ENCODE measurements at regions of chr21 and their contacts with region 1.

Region 1: GRCh38 chr21:33947451-33948095 is 32.0 kb upstream of the ATP5PO start:
- DNase-seq: peak; percentile 76
- H3K4me3 ChIP-seq: no peak overlapping the region
- H3K27ac ChIP-seq: peak overlapping the region; percentile 76
- H3K4me1 ChIP-seq: peaks cover 4% of the 10 kb centered on the region
- H3K27me3 ChIP-seq: no peaks in the 10 kb centered on the region
- CTCF ChIP-seq: no peak

Region 2: DNA sequence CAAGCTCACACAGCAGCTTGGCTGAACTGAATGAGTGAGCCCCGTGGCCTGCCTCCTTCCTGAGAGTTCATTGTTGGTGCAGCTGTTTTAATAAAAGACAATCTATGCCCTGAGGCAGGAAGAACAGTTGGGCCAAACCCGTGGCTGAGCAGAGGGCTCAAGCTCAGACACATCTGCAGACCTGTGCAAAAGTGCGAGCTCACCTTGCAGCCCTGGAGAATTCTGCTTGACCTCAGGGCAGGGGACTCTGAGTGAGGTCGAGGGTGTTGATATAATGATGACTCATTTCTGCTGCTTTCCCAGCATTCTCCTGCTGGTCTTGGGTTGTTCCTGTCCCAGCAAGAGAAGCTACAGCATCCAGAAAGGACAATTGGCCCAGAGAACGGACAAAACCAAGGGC is 93.0 kb before region 1 on chr21:
- intact Hi-C with region 1: no loop called
- DNase-seq: no peak
- H3K4me3 ChIP-seq: no peak overlapping the region
- H3K27ac ChIP-seq: no peak overlapping the region
- H3K4me1 ChIP-seq: no peaks in the 10 kb centered on the region
- H3K27me3 ChIP-seq: no peaks in the 10 kb centered on the region
- CTCF ChIP-seq: no peak

Region 3: DNA sequence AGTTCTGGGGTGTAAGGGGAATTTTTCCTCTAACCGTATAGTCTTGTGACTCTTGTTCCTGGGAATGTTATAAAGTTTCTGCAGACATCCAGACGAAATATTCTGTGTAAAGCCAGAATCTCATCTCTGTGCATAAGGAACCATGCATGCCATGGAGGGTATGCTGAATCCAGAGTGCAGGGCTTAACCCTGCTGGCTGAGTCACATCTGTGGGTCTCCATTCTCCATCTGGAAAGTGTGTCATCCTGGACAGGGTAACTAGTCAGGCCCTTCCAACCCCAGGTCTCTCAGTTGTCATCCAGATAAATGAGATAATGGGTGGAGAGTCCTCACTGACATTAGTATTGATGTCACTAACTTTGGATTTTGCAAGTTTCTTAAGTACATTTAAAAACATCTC is 80.7 kb before region 1 on chr21:
- intact Hi-C with region 1: no loop called
- DNase-seq: no peak
- H3K4me3 ChIP-seq: no peak overlapping the region
- H3K27ac ChIP-seq: no peak overlapping the region
- H3K4me1 ChIP-seq: no peaks in the 10 kb centered on the region
- H3K27me3 ChIP-seq: no peaks in the 10 kb centered on the region
- CTCF ChIP-seq: no peak

Region 4: GRCh38 chr21:34020005-34020847 is 72.7 kb after region 1 on chr21:
- intact Hi-C with region 1: no loop called
- DNase-seq: no peak
- H3K4me3 ChIP-seq: no peak overlapping the region
- H3K27ac ChIP-seq: no peak overlapping the region
- H3K4me1 ChIP-seq: peaks cover 3% of the 10 kb centered on the region
- H3K27me3 ChIP-seq: no peaks in the 10 kb centered on the region
- CTCF ChIP-seq: no peak

Region 5: DNA sequence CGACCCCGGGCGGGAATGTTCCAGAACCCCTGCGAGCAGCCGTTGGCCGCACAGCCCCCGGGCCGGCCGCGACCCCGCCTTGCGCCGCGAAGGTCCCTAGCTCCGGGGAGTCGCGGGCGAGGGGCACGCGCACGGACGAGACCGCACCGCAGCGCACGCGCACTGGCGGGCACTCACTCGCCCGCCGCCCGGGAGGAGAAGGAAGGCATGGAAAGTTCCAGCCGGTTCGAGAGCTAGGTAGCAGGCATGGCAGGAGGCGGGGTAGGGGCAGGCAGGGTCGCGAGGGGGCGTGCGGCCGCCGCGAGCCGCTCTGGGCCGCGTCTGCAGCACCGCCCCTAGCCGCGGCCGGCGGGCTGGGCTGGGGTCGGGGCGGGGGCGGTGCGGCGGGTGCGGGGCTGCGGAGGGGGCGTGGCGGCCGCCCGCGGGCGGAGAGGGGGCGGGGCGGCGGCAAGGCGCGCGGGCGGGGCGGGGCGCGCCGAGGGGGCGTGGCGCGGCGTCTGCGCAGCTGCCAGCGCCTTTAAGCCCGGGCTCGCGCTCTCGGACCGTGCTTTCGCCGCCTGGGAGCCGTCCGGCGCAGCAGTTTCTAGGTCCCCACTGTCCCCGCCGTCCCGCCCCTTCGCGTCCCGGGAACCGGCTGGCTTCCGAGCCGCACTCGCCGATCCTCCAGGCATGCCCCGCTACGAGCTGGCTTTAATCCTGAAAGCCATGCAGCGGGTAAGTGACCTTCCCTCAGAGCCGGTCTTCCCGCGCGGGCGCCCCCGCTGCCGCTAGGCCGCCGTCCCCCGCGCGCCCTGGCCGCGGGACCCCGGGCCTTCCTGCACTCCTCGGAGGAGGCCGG is 125.7 kb after region 1 on chr21 and contains the starts of genes MRPS6 and SLC5A3:
- intact Hi-C with region 1: loop called (anchors 10 kb)
- DNase-seq: peak; percentile 93
- H3K4me3 ChIP-seq: peak within 1 kb of the TSS; percentile 59
- H3K27ac ChIP-seq: peak within 1 kb of the TSS; percentile 80
- H3K4me1 ChIP-seq: no peaks in the 10 kb centered on the region
- H3K27me3 ChIP-seq: no peaks in the 10 kb centered on the region
- CTCF ChIP-seq: no peak
- total RNA-seq, gene MRPS6: 66.6 to 76.9 TPM
- total RNA-seq, gene SLC5A3: 20.1 to 28.6 TPM